Colonic mucosa (tissue), 4 donors: ENCODE measurements at regions of chr15 and their contacts with region 1.

Region 1: GRCh38 chr15:62896978-62897647 is 145.4 kb upstream of the TPM1 start:
- DNase-seq: peak; percentile 86
- H3K4me3 ChIP-seq: no peak overlapping the region
- H3K27ac ChIP-seq: peak overlapping the region; percentile 63
- H3K4me1 ChIP-seq: peaks cover 8% of the 10 kb centered on the region
- H3K27me3 ChIP-seq: no peaks in the 10 kb centered on the region
- CTCF ChIP-seq: no peak

Region 2: GRCh38 chr15:62985768-62986167 is 88.7 kb after region 1 on chr15:
- intact Hi-C with region 1: loop called (anchors 10 kb)
- DNase-seq: no peak
- H3K4me3 ChIP-seq: no peak overlapping the region
- H3K27ac ChIP-seq: no peak overlapping the region
- H3K4me1 ChIP-seq: no peaks in the 10 kb centered on the region
- H3K27me3 ChIP-seq: no peaks in the 10 kb centered on the region
- CTCF ChIP-seq: no peak

Region 3: GRCh38 chr15:63030101-63030551 is 133.0 kb after region 1 on chr15:
- intact Hi-C with region 1: loop called (anchors 10 kb)
- DNase-seq: peak; percentile 46
- H3K4me3 ChIP-seq: no peak overlapping the region
- H3K27ac ChIP-seq: no peak overlapping the region
- H3K4me1 ChIP-seq: peaks cover under 1% of the 10 kb centered on the region
- H3K27me3 ChIP-seq: no peaks in the 10 kb centered on the region
- CTCF ChIP-seq: no peak